GM12878 (cell line): ENCODE measurements at regions of chr15 and their contacts with region 1.

Region 1: DNA sequence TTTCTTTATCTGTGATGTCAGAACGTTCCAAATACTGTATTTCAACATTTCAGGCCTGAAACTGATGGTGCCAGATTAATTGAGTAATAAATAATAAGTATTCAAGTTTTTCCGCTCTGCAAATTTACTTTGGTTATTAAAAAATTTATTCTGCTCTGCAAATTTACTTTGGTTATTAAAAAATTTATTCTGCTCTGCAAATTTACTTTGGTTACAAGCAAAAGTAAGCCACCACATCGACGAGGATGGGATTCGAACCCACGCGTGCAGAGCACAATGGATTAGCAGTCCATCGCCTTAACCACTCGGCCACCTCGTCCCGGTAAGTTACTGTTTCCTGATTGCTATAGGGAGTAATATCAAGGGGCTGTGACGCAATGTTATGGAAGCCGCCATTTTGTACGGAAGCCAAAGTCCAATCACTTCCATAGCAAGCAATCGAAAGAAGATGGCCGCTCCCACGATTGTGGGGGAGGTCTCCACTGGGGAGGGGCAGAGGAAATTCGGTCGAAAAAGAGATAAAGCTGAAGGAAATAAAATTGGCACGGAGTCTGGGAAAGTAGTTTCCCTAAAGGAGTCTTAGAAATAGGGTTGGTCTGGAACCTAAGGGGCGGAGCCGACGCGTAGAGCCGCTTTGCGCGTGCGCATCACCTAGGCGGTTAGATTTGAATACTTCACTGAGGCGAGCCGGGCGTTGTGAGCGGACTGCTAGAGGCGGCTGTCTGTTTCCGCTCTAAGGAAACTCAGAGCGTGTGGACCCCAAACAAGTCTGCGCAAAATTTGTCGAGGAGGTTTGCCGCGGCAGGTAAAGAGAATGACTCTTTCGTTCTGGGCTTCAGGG is at the start of gene KNL1:
- DNase-seq: peak; percentile 99
- ATAC-seq: peak; percentile 86
- H3K4me3 ChIP-seq: peak within 1 kb of the TSS; percentile 90
- H3K27ac ChIP-seq: peak within 1 kb of the TSS; percentile 98
- H3K4me1 ChIP-seq: peaks cover 9% of the 10 kb centered on the region; the same call in 1 of the 2 replicates
- H3K27me3 ChIP-seq: no peaks in the 10 kb centered on the region
- CTCF ChIP-seq: no peak
- EP300 ChIP-seq: peak in 1 of 2 experiments; percentile 83; a peak in 1 of 4 replicates
- POLR2A ChIP-seq: peak; percentile 68
- RAD21 ChIP-seq: no peak
- polyA plus RNA-seq, gene KNL1: 10.9 to 15.8 TPM

Region 2: DNA sequence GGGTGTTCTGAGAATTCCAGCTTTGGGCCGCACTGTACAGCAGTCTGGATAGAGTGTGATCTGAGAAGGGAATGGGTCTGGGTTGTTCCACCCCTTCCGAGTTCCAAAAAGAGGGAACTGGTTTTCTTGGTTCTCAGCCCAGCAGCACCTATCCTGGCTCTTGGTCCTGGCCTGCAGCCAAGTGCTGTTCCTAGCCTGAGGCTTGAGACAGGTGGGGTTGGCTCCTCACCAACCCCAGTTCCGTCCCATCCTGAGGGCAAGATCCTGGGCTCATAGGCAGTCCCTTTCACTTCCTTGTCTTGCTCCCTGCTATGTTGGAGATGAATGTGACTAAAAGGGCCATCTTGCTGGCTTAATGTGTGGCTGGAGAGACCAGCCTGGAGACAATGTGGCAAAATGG is 173.0 kb before region 1 on chr15:
- CTCF ChIA-PET with region 1: no interaction called
- POLR2A ChIA-PET with region 1: no interaction called
- RAD21 ChIA-PET with region 1: no interaction called
- SMC1A ChIA-PET with region 1: no interaction called
- in situ Hi-C with region 1: no loop called
- intact Hi-C with region 1: no loop called
- DNase-seq: no peak
- ATAC-seq: no peak
- H3K4me3 ChIP-seq: no peak overlapping the region
- H3K27ac ChIP-seq: no peak overlapping the region
- H3K4me1 ChIP-seq: no peaks in the 10 kb centered on the region
- H3K27me3 ChIP-seq: no peaks in the 10 kb centered on the region
- CTCF ChIP-seq: no peak
- EP300 ChIP-seq: no peak
- POLR2A ChIP-seq: no peak
- RAD21 ChIP-seq: no peak

Region 3: GRCh38 chr15:40440743-40441564 is 152.9 kb before region 1 on chr15 and contains the start of gene BAHD1:
- CTCF ChIA-PET with region 1: interaction called, 3 read pairs
- POLR2A ChIA-PET with region 1: interaction called, 5 read pairs
- RAD21 ChIA-PET with region 1: no interaction called
- SMC1A ChIA-PET with region 1: interaction called, 4 read pairs
- in situ Hi-C with region 1: no loop called
- intact Hi-C with region 1: loop called (anchors 10 kb)
- DNase-seq: peak; percentile 76
- ATAC-seq: peak; percentile 92
- H3K4me3 ChIP-seq: peak within 1 kb of the TSS; percentile 86
- H3K27ac ChIP-seq: peak within 1 kb of the TSS; percentile 33; the same call in 1 of the 2 replicates
- H3K4me1 ChIP-seq: peaks cover 19% of the 10 kb centered on the region
- H3K27me3 ChIP-seq: peaks cover 11 to 19% of the 10 kb centered on the region in 2 experiments
- CTCF ChIP-seq: peak in 1 of 3 experiments; percentile 18; a peak in 2 of 6 replicates
- EP300 ChIP-seq: no peak
- POLR2A ChIP-seq: peak; percentile 78
- RAD21 ChIP-seq: 0 out of 2 replicates have a peak, but pooled peaks have one; percentile 21
- polyA plus RNA-seq, gene BAHD1: 0.21 to 0.88 TPM

Region 4: DNA sequence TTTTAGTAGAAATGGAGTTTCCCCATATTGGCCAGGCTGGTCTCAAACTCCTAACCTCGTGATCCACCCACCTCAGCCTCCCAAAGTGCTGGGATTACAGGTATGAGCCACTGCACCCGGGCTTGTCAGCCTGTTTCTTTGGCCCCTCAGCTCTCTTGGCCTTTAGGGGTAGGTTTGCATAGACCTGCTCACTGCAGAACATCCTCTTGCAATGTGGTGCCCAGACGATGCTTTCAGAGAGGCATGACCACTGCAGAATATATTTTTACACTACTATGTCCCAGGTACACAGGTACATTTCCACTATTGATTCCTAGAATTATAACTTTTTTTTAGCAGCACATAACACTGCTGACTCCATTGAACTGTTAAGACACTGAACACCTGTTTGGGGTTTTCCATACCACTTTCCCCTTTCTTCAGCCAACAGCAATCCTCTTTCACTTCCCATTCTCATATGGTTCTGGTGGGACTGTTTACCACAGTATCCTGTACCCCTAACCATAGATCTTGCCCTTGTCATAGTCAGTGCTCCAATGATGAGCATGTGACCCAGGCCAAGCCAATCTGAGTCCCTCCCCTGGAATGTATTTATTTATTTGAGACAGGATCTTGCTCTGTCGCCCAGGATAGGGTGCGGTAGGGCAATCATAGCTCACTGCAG is 50.0 kb before region 1 on chr15:
- CTCF ChIA-PET with region 1: interaction called, 12 read pairs
- POLR2A ChIA-PET with region 1: interaction called, 7 read pairs
- RAD21 ChIA-PET with region 1: interaction called, 4 read pairs
- SMC1A ChIA-PET with region 1: interaction called, 4 read pairs
- in situ Hi-C with region 1: no loop called
- intact Hi-C with region 1: no loop called
- DNase-seq: peak; percentile 94
- ATAC-seq: peak; percentile 91
- H3K4me3 ChIP-seq: peak overlapping the region; percentile 24; the same call in 1 of the 2 replicates
- H3K27ac ChIP-seq: peak overlapping the region; percentile 73
- H3K4me1 ChIP-seq: peaks cover 57% of the 10 kb centered on the region
- H3K27me3 ChIP-seq: no peaks in the 10 kb centered on the region
- CTCF ChIP-seq: no peak
- EP300 ChIP-seq: peak; percentile 94 to 95
- POLR2A ChIP-seq: no peak
- RAD21 ChIP-seq: 0 out of 2 replicates have a peak, but pooled peaks have one; percentile 9

Region 5: GRCh38 chr15:40558952-40559742 is 34.7 kb before region 1 on chr15:
- CTCF ChIA-PET with region 1: interaction called, 56 read pairs
- POLR2A ChIA-PET with region 1: interaction called, 21 read pairs
- RAD21 ChIA-PET with region 1: interaction called, 7 read pairs
- SMC1A ChIA-PET with region 1: interaction called, 6 read pairs
- in situ Hi-C with region 1: no loop called
- intact Hi-C with region 1: loop called (anchors 5 kb)
- DNase-seq: no peak
- ATAC-seq: peak; percentile 17
- H3K4me3 ChIP-seq: peak overlapping the region; percentile 43; the same call in 1 of the 2 replicates
- H3K27ac ChIP-seq: peak overlapping the region; percentile 91
- H3K4me1 ChIP-seq: peaks cover 42% of the 10 kb centered on the region
- H3K27me3 ChIP-seq: no peaks in the 10 kb centered on the region
- CTCF ChIP-seq: no peak
- EP300 ChIP-seq: no peak
- POLR2A ChIP-seq: no peak
- RAD21 ChIP-seq: no peak

Region 6: DNA sequence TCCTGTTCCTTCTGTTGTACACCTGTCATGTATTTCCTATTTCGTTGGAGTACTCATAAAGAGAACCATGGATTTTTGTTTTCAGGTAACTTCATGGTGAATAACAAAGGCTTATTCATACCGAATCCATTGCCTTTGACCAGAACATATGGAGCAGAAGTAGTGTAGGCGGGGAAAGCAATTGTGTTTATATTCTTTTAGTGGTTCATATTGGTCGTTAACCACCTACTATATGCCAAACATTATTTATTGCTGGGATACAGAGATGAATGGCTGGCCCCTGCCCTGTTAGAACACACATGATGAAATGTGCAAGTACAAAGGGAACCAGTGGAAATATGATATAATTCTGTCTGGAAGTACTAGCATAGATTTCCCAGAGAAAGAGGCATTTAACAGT is 14.9 kb before region 1 on chr15:
- CTCF ChIA-PET with region 1: interaction called, 14 read pairs
- POLR2A ChIA-PET with region 1: interaction called, 3 read pairs
- RAD21 ChIA-PET with region 1: interaction called, 5 read pairs
- SMC1A ChIA-PET with region 1: interaction called, 7 read pairs
- in situ Hi-C with region 1: no loop called
- intact Hi-C with region 1: no loop called
- DNase-seq: no peak
- ATAC-seq: no peak
- H3K4me3 ChIP-seq: no peak overlapping the region
- H3K27ac ChIP-seq: no peak overlapping the region
- H3K4me1 ChIP-seq: no peaks in the 10 kb centered on the region
- H3K27me3 ChIP-seq: no peaks in the 10 kb centered on the region
- CTCF ChIP-seq: no peak
- EP300 ChIP-seq: no peak
- POLR2A ChIP-seq: no peak
- RAD21 ChIP-seq: no peak

Region 7: DNA sequence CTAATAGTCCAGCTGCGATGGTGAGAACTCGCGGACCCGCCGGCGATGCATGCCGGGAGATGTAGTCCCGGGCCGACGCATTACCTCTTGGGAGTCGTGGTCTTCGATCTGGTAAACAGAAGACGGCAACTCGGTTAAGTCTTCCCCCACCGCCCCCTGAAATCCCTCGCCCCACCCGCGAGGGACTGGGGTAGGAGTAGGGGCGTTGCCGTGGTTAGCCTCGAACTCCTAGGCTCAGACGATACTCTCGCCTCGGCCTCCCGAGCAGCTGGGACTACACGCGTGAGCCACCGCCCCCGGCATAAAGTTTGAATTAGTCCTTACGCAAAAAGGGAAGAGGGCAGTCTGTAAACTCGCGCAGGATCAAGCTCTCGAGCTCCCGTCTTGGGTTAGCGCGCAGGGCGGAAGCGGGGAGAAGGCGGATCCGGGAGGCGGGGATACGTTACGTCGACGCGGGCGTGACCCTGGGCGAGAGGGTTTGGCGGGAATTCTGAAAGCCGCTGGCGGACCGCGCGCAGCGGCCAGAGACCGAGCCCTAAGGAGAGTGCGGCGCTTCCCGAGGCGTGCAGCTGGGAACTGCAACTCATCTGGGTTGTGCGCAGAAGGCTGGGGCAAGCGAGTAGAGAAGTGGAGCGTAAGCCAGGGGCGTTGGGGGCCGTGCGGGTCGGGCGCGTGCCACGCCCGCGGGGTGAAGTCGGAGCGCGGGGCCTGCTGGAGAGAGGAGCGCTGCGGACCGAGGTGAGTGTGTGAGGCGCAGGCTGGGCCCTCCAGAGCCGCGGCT is 101.1 kb after region 1 on chr15 and contains the start of gene RAD51:
- CTCF ChIA-PET with region 1: interaction called, 7 read pairs
- POLR2A ChIA-PET with region 1: interaction called, 4 read pairs
- RAD21 ChIA-PET with region 1: interaction called, 3 read pairs
- SMC1A ChIA-PET with region 1: interaction called, 5 read pairs
- in situ Hi-C with region 1: no loop called
- intact Hi-C with region 1: loop called (anchors 2 kb)
- DNase-seq: peak; percentile 84
- ATAC-seq: peak; percentile 95
- H3K4me3 ChIP-seq: peak within 1 kb of the TSS; percentile 96
- H3K27ac ChIP-seq: peak within 1 kb of the TSS; percentile 86
- H3K4me1 ChIP-seq: peaks cover 2% of the 10 kb centered on the region
- H3K27me3 ChIP-seq: no peaks in the 10 kb centered on the region
- CTCF ChIP-seq: no peak
- EP300 ChIP-seq: 0 out of 4 replicates have a peak, but pooled peaks of 1 of the 2 experiments have one; percentile 40
- POLR2A ChIP-seq: peak; percentile 82
- RAD21 ChIP-seq: no peak
- polyA plus RNA-seq, gene RAD51: 13.1 to 23.6 TPM

Region 8: GRCh38 chr15:40873625-40874561 is 280.1 kb after region 1 on chr15 and contains the start of gene RHOV:
- CTCF ChIA-PET with region 1: interaction called, 6 read pairs
- POLR2A ChIA-PET with region 1: interaction called, 4 read pairs
- RAD21 ChIA-PET with region 1: no interaction called
- SMC1A ChIA-PET with region 1: interaction called, 4 read pairs
- in situ Hi-C with region 1: no loop called
- intact Hi-C with region 1: loop called (anchors 10 kb)
- DNase-seq: no peak
- ATAC-seq: peak; percentile 80
- H3K4me3 ChIP-seq: peak within 1 kb of the TSS; percentile 65
- H3K27ac ChIP-seq: peak within 1 kb of the TSS; percentile 78
- H3K4me1 ChIP-seq: peaks cover 37% of the 10 kb centered on the region
- H3K27me3 ChIP-seq: no peaks in the 10 kb centered on the region
- CTCF ChIP-seq: peak; percentile 44 to 63 (median 55); a peak in 5 of 6 replicates
- EP300 ChIP-seq: no peak
- POLR2A ChIP-seq: peak; percentile 90
- RAD21 ChIP-seq: peak; percentile 32; the same call in 1 of the 2 replicates
- polyA plus RNA-seq, gene RHOV: 0.24 to 1.3 TPM